Sciatic nerve (tissue), 2 donors: ENCODE measurements at regions of chr11 and their contacts with region 1.

Region 1: GRCh38 chr11:77758331-77758730 is 62.2 kb downstream of the RSF1 start:
- DNase-seq: no peak
- ATAC-seq: no peak

Region 2: DNA sequence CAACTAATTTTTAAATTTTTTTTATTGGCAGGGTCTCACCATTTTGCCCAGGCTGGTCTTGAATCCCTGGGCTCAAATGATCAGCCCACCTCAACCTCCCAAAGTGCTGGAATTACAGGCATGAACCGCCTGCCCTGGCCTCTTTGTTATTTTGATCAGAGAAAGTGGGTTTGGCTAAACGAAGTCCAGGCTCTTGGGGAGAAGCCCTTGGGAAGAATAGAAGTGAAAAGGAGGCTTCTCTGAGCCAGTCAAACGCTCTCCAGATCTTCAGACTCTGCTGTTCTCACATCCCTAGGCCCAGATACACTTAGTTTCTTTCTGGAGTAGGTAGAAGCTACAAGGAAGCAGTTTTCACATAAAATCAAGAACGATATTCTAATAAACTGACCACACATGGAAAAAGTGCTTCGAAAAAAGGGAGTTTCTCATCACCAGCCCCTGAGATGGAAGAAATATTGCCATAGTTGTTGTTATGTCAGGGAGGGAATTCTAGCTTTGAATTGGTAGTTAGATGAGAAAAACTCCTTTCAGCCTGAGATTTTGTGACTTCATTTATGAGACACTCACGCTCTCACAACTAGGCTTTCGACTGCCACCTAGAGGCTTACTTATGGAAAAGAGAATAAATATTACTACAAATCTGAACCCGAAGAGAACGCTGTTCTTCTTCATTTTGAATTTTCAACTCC is 210.3 kb before region 1 on chr11:
- intact Hi-C with region 1: no loop called
- DNase-seq: no peak
- ATAC-seq: peak; percentile 71

Region 3: GRCh38 chr11:77783025-77783424 is 24.7 kb after region 1 on chr11:
- intact Hi-C with region 1: loop called (anchors 1 kb)
- DNase-seq: no peak
- ATAC-seq: no peak